Right ventricle myocardium inferior (tissue), 1 donor: ENCODE measurements at regions of chr16 and their contacts with region 1.

Region 1: DNA sequence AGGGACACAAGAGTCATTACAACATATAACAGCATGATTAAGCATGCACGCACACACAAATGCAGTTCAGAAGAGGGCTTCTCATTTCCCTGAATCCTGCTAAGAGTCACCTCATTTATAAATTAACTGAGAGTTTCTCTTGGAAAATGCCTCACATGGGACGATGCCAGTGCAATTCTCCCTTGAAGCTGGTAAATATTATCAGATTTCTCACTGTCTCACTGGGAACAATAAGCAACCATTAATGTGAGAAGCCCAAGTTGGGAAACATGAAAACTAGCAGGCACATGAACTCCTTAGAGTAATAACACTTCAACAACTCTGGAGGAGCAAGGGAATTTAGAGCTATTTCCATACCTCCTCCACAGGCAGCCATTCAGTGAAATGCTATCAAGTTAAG is 26.4 kb downstream of the SETD6 start:
- DNase-seq: no peak
- ATAC-seq: no peak

Region 2: GRCh38 chr16:58577141-58577540 is 35.4 kb after region 1 on chr16:
- intact Hi-C with region 1: loop called (anchors 5 kb)
- DNase-seq: no peak
- ATAC-seq: no peak